Naive thymus-derived CD4-positive, alpha-beta T cell (primary cell): ENCODE measurements at regions of chrX and their contacts with region 1.

Region 1: DNA sequence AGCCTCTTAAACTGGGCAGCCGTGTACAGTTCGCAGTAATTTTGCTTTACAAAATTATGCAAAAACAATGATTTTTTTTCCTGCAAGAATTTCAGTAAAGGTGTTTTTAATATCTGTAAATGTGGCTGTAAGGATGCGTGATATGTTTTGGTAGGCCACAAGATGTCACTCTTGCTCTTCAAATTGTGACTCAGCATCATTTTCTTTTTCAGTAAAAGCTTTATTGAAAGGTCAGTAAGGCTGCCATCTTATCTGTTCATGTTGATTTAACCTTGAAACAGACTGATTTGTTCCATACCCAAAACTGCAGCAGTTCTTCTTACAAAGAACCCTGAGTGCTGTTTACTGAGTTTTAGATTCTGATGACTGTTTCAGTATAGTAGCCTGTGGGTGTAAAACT is 39.9 kb downstream of the TXLNG start:
- DNase-seq: peak in 5 of 9 donors; percentile 10 to 37 (median 19)
- ATAC-seq: peak; percentile 57
- H3K4me3 ChIP-seq: no peak overlapping the region
- H3K4me3 Mint-ChIP-seq: no peak overlapping the region
- H3K27ac ChIP-seq: no peak overlapping the region
- H3K27ac Mint-ChIP-seq: no peak overlapping the region
- H3K4me1 ChIP-seq: no peaks in the 10 kb centered on the region
- H3K4me1 Mint-ChIP-seq: peaks cover 0 to 11% (median 0%) of the 10 kb centered on the region in 7 donors
- H3K27me3 ChIP-seq: no peaks in the 10 kb centered on the region
- H3K27me3 Mint-ChIP-seq: no peaks in the 10 kb centered on the region

Region 2: GRCh38 chrX:16670998-16671397 is 155.2 kb before region 1 on chrX:
- CTCF ChIA-PET with region 1: no interaction called
- POLR2A ChIA-PET with region 1: no interaction called
- intact Hi-C with region 1: no loop called
- DNase-seq: peak in 7 of 9 donors; percentile 13 to 57 (median 37)
- ATAC-seq: peak; percentile 64
- H3K4me3 ChIP-seq: no peak overlapping the region
- H3K4me3 Mint-ChIP-seq: no peak overlapping the region
- H3K27ac ChIP-seq: no peak overlapping the region
- H3K27ac Mint-ChIP-seq: peak overlapping the region in 1 of 9 donors; percentile 32
- H3K4me1 ChIP-seq: no peaks in the 10 kb centered on the region
- H3K4me1 Mint-ChIP-seq: peaks cover 0 to 5% (median 0%) of the 10 kb centered on the region in 7 donors
- H3K27me3 ChIP-seq: no peaks in the 10 kb centered on the region
- H3K27me3 Mint-ChIP-seq: no peaks in the 10 kb centered on the region

Region 3: DNA sequence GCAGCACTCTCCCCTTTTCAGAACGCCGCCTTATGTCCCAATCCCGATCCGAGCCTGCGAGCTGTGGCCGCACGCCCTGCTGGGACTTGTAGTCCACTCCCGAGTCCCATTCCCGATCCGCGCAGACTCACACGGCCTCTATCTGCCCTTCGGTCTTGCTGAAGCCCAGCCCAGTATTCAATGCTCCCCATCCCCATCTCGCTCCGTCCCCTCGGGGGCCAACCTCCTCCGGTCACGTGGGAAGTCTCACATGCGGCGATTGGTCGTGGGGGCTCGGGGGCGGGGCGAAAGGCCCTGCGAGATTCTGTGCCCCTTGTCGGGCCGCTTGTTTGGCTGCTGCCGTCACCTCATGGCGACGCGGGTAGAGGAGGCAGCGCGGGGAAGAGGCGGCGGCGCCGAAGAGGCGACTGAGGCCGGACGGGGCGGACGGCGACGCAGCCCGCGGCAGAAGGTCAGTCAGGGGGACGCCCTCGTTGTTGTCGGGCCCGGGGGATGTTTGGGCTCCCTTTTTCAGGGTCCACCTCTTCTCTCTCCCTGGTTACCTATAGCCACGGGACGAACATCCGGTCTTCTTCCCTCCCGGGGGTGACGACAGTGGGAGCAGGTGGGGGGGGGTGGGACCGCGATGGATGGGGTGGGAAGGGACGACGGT is 39.9 kb before region 1 on chrX and contains the start of gene TXLNG:
- CTCF ChIA-PET with region 1: no interaction called
- POLR2A ChIA-PET with region 1: no interaction called
- intact Hi-C with region 1: loop called in 1 of 2 experiments (anchors 5 kb)
- DNase-seq: peak; percentile 81 to 98 (median 97)
- ATAC-seq: peak; percentile 97
- H3K4me3 ChIP-seq: peak within 1 kb of the TSS; percentile 94
- H3K4me3 Mint-ChIP-seq: peak within 1 kb of the TSS; percentile 95 to 99 (median 97)
- H3K27ac ChIP-seq: peak within 1 kb of the TSS; percentile 88
- H3K27ac Mint-ChIP-seq: peak within 1 kb of the TSS; percentile 78 to 94 (median 90)
- H3K4me1 ChIP-seq: peaks cover 0 to 3% of the 10 kb centered on the region in 2 donors
- H3K4me1 Mint-ChIP-seq: peaks cover 4 to 42% (median 12%) of the 10 kb centered on the region in 7 donors
- H3K27me3 ChIP-seq: no peaks in the 10 kb centered on the region
- H3K27me3 Mint-ChIP-seq: no peaks in the 10 kb centered on the region
- total RNA-seq, gene TXLNG: 11.9 to 23.1 (median 17.3) TPM

Region 4: DNA sequence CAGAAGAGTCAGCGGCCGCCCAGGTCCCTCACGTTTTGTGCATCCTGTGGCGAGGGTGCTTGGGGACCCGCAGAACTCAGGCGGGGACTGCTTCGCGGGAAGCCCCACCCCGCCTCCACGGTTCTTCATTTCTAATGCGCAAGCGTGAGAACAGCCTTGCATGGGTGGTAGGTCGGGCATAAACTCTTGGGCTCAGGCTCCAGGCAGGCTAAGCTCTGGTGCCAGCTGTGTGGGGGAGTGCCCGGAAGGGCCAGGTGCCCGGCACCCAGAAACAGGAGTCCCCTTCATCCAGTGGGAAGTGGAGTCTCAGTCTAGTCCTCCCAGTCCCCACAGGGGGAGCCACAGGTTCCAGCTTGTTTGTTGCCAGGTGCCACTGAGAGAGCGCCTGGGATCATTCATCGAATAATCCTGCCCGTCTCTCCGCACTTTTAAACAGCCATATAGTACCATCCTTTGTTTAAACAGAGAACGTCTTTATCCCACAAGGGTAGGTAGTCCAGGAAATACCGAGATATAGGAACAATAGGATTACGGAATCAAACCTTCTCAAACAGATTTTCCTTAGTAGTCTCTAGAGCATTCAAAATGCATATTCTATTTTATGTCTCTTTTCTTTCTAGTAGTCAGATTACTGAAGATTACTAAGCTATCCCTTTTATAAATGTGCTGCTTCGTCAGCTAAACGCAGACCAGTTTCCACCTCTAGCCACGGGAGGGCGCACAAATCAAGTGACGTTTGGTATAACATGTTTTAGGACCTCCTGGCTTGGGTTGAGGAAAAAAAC is 56.7 kb after region 1 on chrX:
- CTCF ChIA-PET with region 1: interaction called, 5 read pairs
- POLR2A ChIA-PET with region 1: interaction called, 3 read pairs
- intact Hi-C with region 1: loop called in 1 of 2 experiments (anchors 2 kb)
- DNase-seq: peak; percentile 32 to 64 (median 57)
- ATAC-seq: peak; percentile 86
- H3K4me3 ChIP-seq: peak overlapping the region; percentile 74
- H3K4me3 Mint-ChIP-seq: peak overlapping the region; percentile 73 to 82 (median 78)
- H3K27ac ChIP-seq: peak overlapping the region; percentile 60
- H3K27ac Mint-ChIP-seq: peak overlapping the region in 7 of 9 donors; percentile 31 to 88 (median 67)
- H3K4me1 ChIP-seq: no peaks in the 10 kb centered on the region
- H3K4me1 Mint-ChIP-seq: peaks cover 0 to 10% (median 4%) of the 10 kb centered on the region in 7 donors
- H3K27me3 ChIP-seq: no peaks in the 10 kb centered on the region
- H3K27me3 Mint-ChIP-seq: peaks cover 0 to 12% (median 0%) of the 10 kb centered on the region in 5 donors

Region 5: DNA sequence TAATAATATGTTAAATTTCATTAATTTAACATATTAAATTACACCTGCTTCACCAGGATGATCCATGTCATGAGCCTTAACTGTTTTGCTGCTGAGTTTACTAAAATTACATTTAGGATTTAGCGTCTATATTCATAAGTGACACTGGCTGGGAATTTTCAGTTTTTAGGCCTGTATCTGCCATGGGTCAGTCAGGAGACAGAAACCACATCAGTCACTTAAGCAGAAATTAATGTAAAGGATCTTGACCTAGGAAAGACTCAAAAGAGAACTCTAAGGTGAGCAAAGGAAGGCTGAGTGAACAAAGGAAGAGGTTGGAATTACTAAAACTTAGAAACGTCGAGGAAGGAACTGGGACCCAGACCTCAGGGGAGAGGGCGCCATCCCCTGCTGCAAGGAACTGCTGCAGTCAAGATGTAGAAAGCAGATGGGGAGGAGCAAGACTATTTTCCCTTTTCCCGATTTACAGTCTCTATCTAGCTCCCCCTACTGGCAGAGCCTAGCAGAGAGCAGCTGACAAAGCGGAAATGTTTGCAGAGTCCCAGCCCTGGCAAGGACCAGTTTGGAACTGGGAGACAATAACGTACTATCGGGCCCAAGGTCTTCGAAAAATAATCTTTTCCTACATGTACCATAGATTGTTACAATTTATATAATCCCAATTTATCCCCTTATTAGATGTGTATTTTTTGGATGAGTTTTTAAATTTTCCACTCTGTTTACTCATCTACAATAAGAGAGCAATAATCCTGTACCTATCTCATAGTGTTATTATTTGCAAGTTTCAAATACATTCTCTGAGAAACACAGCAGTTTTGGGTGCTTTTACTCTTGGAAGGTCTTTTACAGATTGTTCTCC is 66.5 kb after region 1 on chrX:
- CTCF ChIA-PET with region 1: interaction called, 5 read pairs
- POLR2A ChIA-PET with region 1: no interaction called
- intact Hi-C with region 1: loop called (anchors 1 kb)
- DNase-seq: peak in 8 of 9 donors; percentile 39 to 66 (median 57)
- ATAC-seq: peak; percentile 80
- H3K4me3 ChIP-seq: no peak overlapping the region
- H3K4me3 Mint-ChIP-seq: no peak overlapping the region
- H3K27ac ChIP-seq: no peak overlapping the region
- H3K27ac Mint-ChIP-seq: no peak overlapping the region
- H3K4me1 ChIP-seq: peaks cover 4 to 8% of the 10 kb centered on the region in 2 donors
- H3K4me1 Mint-ChIP-seq: peaks cover 5 to 19% (median 15%) of the 10 kb centered on the region in 7 donors
- H3K27me3 ChIP-seq: no peaks in the 10 kb centered on the region
- H3K27me3 Mint-ChIP-seq: peaks cover 0 to 18% (median 0%) of the 10 kb centered on the region in 5 donors

Region 6: DNA sequence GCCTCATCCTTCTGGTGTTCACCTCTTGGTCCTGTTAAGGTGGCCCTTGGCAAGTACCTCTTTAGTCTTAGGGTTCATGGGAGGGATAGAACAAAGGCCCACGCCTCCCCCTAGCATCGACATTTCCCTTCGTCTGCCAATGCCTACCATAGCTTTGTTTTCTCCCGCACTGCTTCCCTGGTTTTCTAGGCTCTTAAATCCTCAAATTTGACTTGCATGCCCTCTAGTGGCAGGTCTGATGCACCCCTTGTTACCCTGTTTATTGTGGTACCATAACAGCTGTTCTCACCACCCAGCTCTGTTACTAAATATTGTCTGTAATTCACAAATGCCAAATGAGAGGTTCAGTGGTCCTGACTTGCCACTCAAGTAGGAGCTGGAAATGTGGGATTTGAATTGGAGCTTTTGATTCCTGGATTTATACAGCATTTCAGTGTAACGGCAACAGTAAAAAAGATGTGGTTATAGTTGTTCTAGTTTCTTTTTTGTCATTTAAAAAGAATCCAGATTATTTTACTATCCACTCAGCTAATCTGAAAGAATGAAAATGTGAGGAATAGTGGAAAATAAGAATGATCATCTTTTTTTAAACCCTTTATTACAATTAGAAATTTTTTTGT is 220.4 kb after region 1 on chrX:
- CTCF ChIA-PET with region 1: interaction called, 6 read pairs
- POLR2A ChIA-PET with region 1: no interaction called
- intact Hi-C with region 1: loop called in 1 of 2 experiments (anchors 1 kb)
- DNase-seq: peak in 8 of 9 donors; percentile 8 to 34 (median 18)
- ATAC-seq: peak; percentile 72
- H3K4me3 ChIP-seq: no peak overlapping the region
- H3K4me3 Mint-ChIP-seq: no peak overlapping the region
- H3K27ac ChIP-seq: no peak overlapping the region
- H3K27ac Mint-ChIP-seq: peak overlapping the region in 1 of 9 donors; percentile 29
- H3K4me1 ChIP-seq: no peaks in the 10 kb centered on the region
- H3K4me1 Mint-ChIP-seq: peaks cover 0 to 3% (median 0%) of the 10 kb centered on the region in 7 donors
- H3K27me3 ChIP-seq: no peaks in the 10 kb centered on the region
- H3K27me3 Mint-ChIP-seq: peaks cover 0 to 3% (median 0%) of the 10 kb centered on the region in 5 donors

Region 7: DNA sequence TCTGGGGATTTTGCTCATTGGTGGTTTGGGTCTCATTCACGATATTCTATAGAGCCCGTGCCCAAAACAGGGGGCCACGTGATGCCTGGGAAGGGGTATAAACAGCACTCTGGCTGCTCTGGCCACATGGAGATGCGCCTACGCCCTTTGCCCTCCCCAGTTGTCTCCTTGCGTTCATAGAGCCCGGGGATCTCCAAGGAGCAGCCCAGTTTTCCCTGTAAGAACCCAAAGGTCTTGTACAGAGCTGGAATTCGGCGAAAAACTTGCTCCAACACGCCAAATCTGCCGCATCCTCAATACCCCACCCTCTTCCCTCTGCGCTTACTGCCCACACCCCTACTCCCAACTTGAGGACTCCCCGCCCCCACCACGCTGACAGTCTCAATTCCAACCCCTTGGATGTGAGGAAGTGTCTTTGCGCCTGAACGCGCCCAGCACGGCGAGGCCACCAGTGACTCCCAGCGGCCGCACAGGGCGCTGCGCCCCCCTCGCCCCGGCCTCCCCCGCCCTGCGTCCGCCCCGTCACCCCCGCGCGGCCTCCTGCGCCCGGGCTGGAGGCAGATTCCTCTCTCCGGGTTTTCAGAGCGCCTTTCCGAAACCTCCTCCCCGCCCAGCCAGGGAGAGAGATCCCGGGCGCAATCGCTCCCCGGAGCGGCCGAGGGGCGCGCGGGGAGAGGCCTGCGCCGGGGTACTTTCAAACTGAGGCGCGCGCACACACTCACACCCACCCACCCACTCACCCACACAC is 548.6 kb after region 1 on chrX and contains the start of gene NHS:
- CTCF ChIA-PET with region 1: no interaction called
- POLR2A ChIA-PET with region 1: no interaction called
- intact Hi-C with region 1: no loop called
- DNase-seq: no peak
- ATAC-seq: no peak
- H3K4me3 ChIP-seq: no peak within 1 kb of the TSS
- H3K4me3 Mint-ChIP-seq: peak within 1 kb of the TSS in 2 of 10 donors; percentile 45 to 59
- H3K27ac ChIP-seq: no peak within 1 kb of the TSS
- H3K27ac Mint-ChIP-seq: no peak within 1 kb of the TSS
- H3K4me1 ChIP-seq: no peaks in the 10 kb centered on the region
- H3K4me1 Mint-ChIP-seq: peaks cover 0 to 6% (median 5%) of the 10 kb centered on the region in 7 donors
- H3K27me3 ChIP-seq: no peaks in the 10 kb centered on the region
- H3K27me3 Mint-ChIP-seq: peaks cover 12 to 47% (median 19%) of the 10 kb centered on the region in 5 donors
- total RNA-seq, gene NHS: 0.05 to 2.6 (median 0.51) TPM

Region 8: DNA sequence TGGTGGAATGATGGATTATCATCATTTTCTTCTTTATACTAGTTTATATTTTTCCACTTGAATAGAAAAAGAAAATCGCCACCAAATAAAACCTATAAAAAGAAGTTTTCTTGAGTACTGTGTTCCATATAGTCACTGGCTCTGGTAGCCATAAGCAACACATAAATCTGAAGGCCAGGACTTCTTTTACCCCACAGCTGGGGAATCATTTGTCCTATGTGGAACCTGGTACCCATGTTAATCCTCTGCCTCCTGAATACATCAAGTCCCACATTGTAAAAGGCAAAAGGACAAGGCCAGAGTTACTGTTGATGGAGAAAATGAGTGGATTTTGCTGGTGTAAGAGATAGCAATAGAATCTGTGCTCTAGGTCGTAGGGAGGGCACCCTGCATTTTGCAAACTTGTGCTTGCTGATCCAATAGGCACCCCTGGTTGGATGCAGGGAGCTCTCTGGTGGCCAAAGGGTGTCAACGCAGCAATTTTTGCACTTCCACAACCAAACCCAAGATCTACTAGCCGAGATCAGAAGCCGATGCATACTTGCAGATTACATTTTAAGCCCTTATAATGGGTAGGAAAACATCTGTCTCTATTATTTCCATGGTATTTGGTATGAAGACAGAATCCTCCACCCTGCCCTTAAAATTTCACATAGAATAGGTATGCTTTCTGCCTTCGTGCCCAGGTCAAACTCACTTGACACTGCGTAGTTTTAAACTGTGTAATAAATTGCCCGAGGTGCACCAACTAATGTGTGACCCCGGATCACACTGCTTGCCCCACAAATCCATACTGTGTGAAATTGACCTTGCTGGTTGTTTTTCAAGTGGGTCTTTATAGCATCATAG is 764.9 kb after region 1 on chrX:
- CTCF ChIA-PET with region 1: no interaction called
- POLR2A ChIA-PET with region 1: no interaction called
- intact Hi-C with region 1: loop called in 1 of 2 experiments (anchors 5 kb)
- DNase-seq: peak in 3 of 9 donors; percentile 0 to 21 (median 12)
- ATAC-seq: peak; percentile 40
- H3K4me3 ChIP-seq: no peak overlapping the region
- H3K4me3 Mint-ChIP-seq: peak overlapping the region in 1 of 10 donors; percentile 3
- H3K27ac ChIP-seq: no peak overlapping the region
- H3K27ac Mint-ChIP-seq: no peak overlapping the region
- H3K4me1 ChIP-seq: no peaks in the 10 kb centered on the region
- H3K4me1 Mint-ChIP-seq: peaks cover 0 to 18% (median 2%) of the 10 kb centered on the region in 7 donors
- H3K27me3 ChIP-seq: no peaks in the 10 kb centered on the region
- H3K27me3 Mint-ChIP-seq: peaks cover 0 to 3% (median 0%) of the 10 kb centered on the region in 5 donors